ENCODE measurements at regions of chr13 and their contacts with region 1.

Region 1: GRCh38 chr13:21243045-21243897 is 66.8 kb downstream of the MRPL57 start:
- DNase-seq: no peak
- H3K4me3 ChIP-seq: no peak overlapping the region
- H3K27ac ChIP-seq: no peak overlapping the region
- H3K4me1 ChIP-seq: no peaks in the 10 kb centered on the region
- H3K27me3 ChIP-seq: peaks cover 13% of the 10 kb centered on the region; the same call in 1 of the 2 replicates
- CTCF ChIP-seq: no peak

Region 2: DNA sequence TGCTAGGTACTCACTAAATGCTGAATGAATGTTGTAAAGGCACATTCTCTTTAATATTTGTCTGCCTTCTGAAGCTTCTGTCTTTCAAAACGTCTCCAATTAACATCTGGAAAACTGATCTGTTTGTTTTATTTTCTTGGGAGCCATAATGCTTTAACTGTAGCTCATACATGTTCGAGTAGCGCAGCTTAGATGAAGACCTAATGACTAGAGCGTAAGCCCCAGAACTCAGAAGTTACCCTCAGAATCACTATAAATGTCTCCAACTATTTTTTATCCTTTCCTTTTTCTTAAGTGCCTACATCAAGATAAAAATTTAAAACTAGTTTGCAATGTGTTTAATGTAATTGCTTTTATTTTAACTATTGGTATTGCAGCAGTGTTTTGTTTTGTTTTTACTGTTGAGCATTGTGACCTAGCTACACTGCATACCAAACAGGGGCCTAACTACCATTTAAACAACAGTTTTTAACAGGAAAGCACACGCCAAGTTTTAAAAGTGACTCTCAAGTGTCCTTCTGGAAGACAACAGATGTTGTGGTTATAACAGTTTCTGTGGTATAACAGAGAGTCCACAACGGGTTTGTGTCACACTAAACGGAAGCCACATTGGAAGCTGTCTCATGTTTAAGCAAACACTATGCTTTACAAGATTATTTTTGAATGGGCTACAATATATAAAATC is 24.8 kb before region 1 on chr13:
- CTCF ChIA-PET with region 1: no interaction called
- POLR2A ChIA-PET with region 1: interaction called, 13 read pairs
- intact Hi-C with region 1: no loop called
- DNase-seq: no peak
- H3K4me3 ChIP-seq: no peak overlapping the region
- H3K27ac ChIP-seq: no peak overlapping the region
- H3K4me1 ChIP-seq: no peaks in the 10 kb centered on the region
- H3K27me3 ChIP-seq: peaks cover 41% of the 10 kb centered on the region
- CTCF ChIP-seq: no peak

Measured in PC-9 (cell line).